ENCODE measurements at regions of chr14 and their contacts with region 1.

Region 1: DNA sequence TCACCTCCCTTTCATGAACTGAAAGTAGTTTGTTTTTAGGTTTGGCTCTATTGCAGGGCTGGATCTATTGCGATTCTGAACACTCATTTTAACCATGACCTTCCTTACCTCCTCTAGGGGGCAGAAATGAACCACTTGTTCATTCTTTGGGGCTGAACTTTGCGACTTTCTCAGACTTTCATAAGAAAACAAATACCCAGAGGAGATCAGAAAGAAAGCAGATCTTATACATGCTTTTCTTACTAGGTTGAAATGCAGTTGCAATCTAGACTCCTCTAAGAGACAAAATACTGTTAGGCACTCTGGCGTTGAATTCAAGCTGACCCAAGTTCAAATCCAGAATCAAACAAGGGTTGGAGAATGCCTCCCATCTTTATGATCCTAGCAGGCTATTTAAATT is 32.6 kb upstream of the PLEKHG3 start:
- DNase-seq: peak in 2 of 5 donors; percentile 84 to 94
- H3K4me3 ChIP-seq: no peak overlapping the region
- H3K27ac ChIP-seq: no peak overlapping the region
- H3K4me1 ChIP-seq: no peaks in the 10 kb centered on the region
- H3K27me3 ChIP-seq: no peaks in the 10 kb centered on the region
- CTCF ChIP-seq: peak; percentile 79

Region 2: DNA sequence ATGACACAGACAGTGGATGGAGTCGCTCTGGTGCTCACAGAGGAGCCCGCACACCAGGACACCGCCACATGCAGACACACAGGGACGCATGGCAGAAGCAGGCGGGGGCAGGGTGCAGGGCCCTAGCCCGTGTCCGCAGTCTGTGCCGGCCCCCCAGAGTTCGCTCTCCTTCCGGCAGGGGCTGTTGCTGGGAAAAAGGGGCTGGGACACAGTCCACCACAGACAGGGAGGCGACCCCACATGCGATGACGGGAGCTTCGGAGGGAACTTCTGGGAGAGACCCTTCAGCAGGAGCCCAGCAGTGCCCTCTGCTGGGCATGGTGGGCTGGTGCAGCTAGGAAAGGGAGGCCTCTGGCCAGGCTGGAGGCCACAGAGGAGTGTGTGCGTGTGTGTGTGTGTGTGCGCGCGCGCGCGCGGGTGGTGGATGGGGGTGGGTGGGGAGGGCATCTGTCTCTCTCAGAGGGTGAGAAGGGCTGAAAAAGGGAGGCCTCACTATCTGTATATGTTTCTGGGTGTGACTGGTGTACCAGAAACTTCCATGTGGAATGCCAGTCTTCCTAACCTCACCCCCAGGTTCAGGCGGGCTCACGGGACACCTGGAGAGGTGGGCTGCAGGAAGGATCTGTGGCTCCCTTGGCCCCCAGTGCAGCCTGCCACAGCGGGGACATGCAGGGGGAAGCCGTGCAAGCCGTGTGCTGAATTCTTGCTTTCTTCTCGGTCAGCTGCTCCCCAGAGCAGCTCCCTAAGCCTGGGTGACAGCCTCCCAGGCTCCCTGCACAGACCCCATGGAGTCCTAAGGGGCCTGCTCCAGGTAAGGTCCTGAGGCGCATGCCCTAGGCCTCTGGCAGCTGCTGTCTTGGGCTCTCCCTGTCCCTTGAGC is 93.3 kb after region 1 on chr14:
- intact Hi-C with region 1: loop called (anchors 5 kb)
- DNase-seq: peak; percentile 86 to 96 (median 90)
- H3K4me3 ChIP-seq: peak overlapping the region in 1 of 3 donors; percentile 49
- H3K27ac ChIP-seq: no peak overlapping the region
- H3K4me1 ChIP-seq: peaks cover 9 to 24% (median 14%) of the 10 kb centered on the region in 3 donors
- H3K27me3 ChIP-seq: no peaks in the 10 kb centered on the region
- CTCF ChIP-seq: peak; percentile 98

Region 3: GRCh38 chr14:64891839-64892375 is 220.3 kb after region 1 on chr14:
- intact Hi-C with region 1: no loop called
- DNase-seq: peak in 3 of 5 donors; percentile 35 to 80 (median 79)
- H3K4me3 ChIP-seq: no peak overlapping the region
- H3K27ac ChIP-seq: no peak overlapping the region
- H3K4me1 ChIP-seq: no peaks in the 10 kb centered on the region
- H3K27me3 ChIP-seq: no peaks in the 10 kb centered on the region
- CTCF ChIP-seq: peak; percentile 71